K562 (cell line): ENCODE measurements at regions of chr7 and their contacts with region 1.

Region 1: DNA sequence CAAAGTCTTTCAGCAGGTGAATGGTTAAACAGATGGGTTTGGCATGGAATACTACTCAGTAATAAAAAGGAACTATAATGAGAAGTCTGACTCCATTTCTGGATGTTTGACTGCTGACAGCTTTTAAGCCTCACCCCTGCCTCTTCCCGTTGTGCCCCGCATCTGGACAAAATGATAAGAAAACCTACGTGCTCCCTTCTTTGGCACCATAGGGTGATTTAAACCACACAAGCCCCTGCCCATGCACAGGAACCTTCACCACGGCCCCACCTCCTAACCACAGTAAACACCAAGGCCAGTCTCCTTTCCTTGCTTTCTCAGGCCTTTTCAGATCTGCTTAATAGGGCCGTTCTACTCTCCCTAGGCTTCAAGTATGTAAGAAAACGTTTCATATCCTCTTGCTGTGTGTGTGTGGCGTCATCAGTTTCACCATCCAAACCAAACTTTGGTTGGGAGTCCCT is 47.1 kb upstream of the UBN2 start:
- DNase-seq: peak; percentile 82 to 90 (median 89)
- ATAC-seq: peak; percentile 85
- H3K4me3 ChIP-seq: no peak overlapping the region
- H3K27ac ChIP-seq: peak overlapping the region; percentile 45; the same call in 2 of the 3 replicates
- H3K4me1 ChIP-seq: peaks cover 7 to 39% of the 10 kb centered on the region in 2 experiments; a peak in 4 of 5 replicates
- H3K27me3 ChIP-seq: no peaks in the 10 kb centered on the region
- CTCF ChIP-seq: no peak
- EP300 ChIP-seq: peak; percentile 67; the same call in 1 of the 2 replicates
- POLR2A ChIP-seq: no peak
- RAD21 ChIP-seq: peak in 1 of 2 experiments; percentile 6; a peak in 1 of 4 replicates

Region 2: GRCh38 chr7:137535579-137535978 is 1648.3 kb before region 1 on chr7:
- CTCF ChIA-PET with region 1: no interaction called
- POLR2A ChIA-PET with region 1: no interaction called
- in situ Hi-C with region 1: no loop called
- intact Hi-C with region 1: no loop called
- DNase-seq: no peak
- ATAC-seq: no peak
- H3K4me3 ChIP-seq: no peak overlapping the region
- H3K27ac ChIP-seq: no peak overlapping the region
- H3K4me1 ChIP-seq: no peaks in the 10 kb centered on the region
- H3K27me3 ChIP-seq: no peaks in the 10 kb centered on the region
- CTCF ChIP-seq: no peak
- EP300 ChIP-seq: no peak
- POLR2A ChIP-seq: no peak
- RAD21 ChIP-seq: no peak

Region 3: DNA sequence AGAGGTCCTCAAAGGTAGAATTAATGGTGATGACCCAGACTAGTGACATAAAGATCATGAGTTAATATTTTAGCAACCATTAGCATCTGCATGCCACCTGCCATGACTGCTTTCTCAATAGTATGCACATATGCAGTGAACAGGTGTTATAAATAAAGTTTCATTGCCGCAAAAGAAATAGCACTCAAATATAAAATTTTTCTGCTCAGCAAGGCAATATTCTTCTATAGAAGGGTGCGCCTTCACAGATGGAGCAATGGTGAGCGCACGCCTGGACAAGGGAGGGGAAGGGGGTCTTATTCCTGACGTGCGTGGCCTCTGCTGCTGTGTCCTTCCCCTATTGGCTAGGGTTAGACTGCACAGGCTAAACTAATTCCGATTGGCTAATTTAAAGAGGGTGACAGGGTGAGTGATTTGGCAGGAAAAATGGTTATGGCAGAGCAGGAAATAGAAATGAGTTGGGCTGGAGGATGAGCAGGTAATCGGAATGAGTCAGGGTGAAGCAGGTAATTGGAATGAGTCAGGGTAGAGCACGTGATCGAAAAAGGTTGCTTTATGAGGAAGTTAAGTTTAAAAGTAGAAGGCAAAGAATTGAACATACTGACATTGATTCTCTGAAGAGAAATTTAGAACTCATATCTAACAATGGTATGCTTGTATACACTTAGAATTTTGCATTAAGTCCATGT is 748.5 kb before region 1 on chr7:
- CTCF ChIA-PET with region 1: no interaction called
- POLR2A ChIA-PET with region 1: no interaction called
- in situ Hi-C with region 1: no loop called
- intact Hi-C with region 1: no loop called
- DNase-seq: no peak
- ATAC-seq: no peak
- H3K4me3 ChIP-seq: no peak overlapping the region
- H3K27ac ChIP-seq: no peak overlapping the region
- H3K4me1 ChIP-seq: peaks cover 0 to under 1% of the 10 kb centered on the region in 2 experiments; a peak in 3 of 5 replicates
- H3K27me3 ChIP-seq: no peaks in the 10 kb centered on the region
- CTCF ChIP-seq: no peak
- EP300 ChIP-seq: no peak
- POLR2A ChIP-seq: no peak
- RAD21 ChIP-seq: no peak

Region 4: GRCh38 chr7:139153832-139154231 is 30.1 kb before region 1 on chr7:
- CTCF ChIA-PET with region 1: no interaction called
- POLR2A ChIA-PET with region 1: no interaction called
- in situ Hi-C with region 1: no loop called
- intact Hi-C with region 1: loop called (anchors 2 kb)
- DNase-seq: no peak
- ATAC-seq: peak; percentile 61
- H3K4me3 ChIP-seq: no peak overlapping the region
- H3K27ac ChIP-seq: no peak overlapping the region
- H3K4me1 ChIP-seq: no peaks in the 10 kb centered on the region
- H3K27me3 ChIP-seq: no peaks in the 10 kb centered on the region
- CTCF ChIP-seq: no peak
- EP300 ChIP-seq: no peak
- POLR2A ChIP-seq: no peak
- RAD21 ChIP-seq: no peak

Region 5: DNA sequence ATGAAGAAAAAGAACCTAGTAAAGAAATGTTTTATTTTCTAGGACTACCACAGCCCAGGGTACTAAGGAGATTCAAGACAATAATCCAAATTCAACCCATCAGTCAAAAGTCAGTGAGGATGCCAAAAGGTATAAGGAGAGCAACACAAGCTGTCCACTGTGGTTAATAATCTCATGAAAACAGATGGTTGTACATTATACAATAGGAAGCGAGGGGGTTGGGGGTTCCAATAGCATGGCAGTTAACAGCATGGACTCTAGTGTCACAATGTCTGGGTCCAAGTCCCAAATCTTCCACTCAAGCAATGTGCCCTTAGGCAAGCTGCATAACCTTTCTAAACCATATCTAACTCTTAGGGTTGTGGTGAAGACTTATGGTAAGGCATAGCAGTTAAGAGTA is 1705.7 kb after region 1 on chr7:
- CTCF ChIA-PET with region 1: no interaction called
- POLR2A ChIA-PET with region 1: no interaction called
- in situ Hi-C with region 1: no loop called
- intact Hi-C with region 1: loop called (anchors 5 kb)
- DNase-seq: peak in 2 of 4 experiments; percentile 65 to 77
- ATAC-seq: peak; percentile 74
- H3K4me3 ChIP-seq: no peak overlapping the region
- H3K27ac ChIP-seq: peak overlapping the region; percentile 55; the same call in 1 of the 3 replicates
- H3K4me1 ChIP-seq: peaks cover 0 to 13% of the 10 kb centered on the region in 2 experiments; a peak in 2 of 5 replicates
- H3K27me3 ChIP-seq: no peaks in the 10 kb centered on the region
- CTCF ChIP-seq: no peak
- EP300 ChIP-seq: peak; percentile 63; the same call in 1 of the 2 replicates
- POLR2A ChIP-seq: no peak
- RAD21 ChIP-seq: no peak